CD8-positive, alpha-beta T cell (primary cell): ENCODE measurements at regions of chr11 and their contacts with region 1.

Region 1: GRCh38 chr11:60265373-60266214 is 14.9 kb upstream of the MS4A4A start:
- DNase-seq: peak in 2 of 9 experiments; percentile 25 to 37
- ATAC-seq: no peak
- H3K4me3 ChIP-seq: no peak overlapping the region
- H3K4me3 Mint-ChIP-seq: no peak overlapping the region
- H3K27ac ChIP-seq: no peak overlapping the region
- H3K27ac Mint-ChIP-seq: no peak overlapping the region
- H3K4me1 ChIP-seq: no peaks in the 10 kb centered on the region
- H3K4me1 Mint-ChIP-seq: no peaks in the 10 kb centered on the region
- H3K27me3 ChIP-seq: no peaks in the 10 kb centered on the region
- H3K27me3 Mint-ChIP-seq: no peaks in the 10 kb centered on the region
- CTCF ChIP-seq: peak; percentile 69

Region 2: DNA sequence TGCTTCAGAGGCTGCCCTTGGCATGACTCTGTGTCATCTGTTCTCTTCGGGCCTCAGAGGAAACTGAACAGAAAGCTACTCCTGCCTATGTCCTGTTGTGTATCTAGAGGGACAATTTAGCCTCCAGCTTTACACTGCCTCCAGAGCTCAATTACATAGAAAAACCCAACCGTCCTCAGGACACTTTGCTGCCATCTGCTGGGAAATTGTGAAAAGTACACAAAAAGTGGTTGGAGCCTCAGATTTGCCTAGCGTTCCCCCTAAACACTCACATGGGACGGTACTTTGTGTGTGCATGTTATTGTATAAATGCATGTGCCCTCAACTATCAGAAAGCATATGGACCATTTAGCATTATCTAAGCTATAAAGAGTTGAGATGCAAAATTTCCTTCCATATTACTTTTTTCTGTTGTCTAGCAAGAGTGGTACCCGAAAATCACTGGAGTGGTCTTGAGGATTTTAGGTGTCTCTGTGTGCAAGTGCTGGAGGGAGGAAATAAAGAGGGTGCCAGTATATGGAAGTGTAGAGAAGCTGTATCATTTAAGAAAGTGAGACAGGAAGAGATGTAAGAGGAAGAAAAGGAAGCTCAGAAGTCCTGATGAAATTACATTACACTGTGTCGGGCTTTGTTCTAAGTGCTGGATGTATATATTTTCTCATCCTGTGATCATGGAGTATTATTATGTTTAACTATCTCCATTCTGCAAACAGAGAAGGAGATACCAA is 13.9 kb before region 1 on chr11:
- CTCF ChIA-PET with region 1: interaction called, 20 read pairs
- POLR2A ChIA-PET with region 1: no interaction called
- intact Hi-C with region 1: no loop called
- DNase-seq: peak in 3 of 9 experiments; percentile 7 to 30 (median 11)
- ATAC-seq: no peak
- H3K4me3 ChIP-seq: no peak overlapping the region
- H3K4me3 Mint-ChIP-seq: no peak overlapping the region
- H3K27ac ChIP-seq: no peak overlapping the region
- H3K27ac Mint-ChIP-seq: no peak overlapping the region
- H3K4me1 ChIP-seq: no peaks in the 10 kb centered on the region
- H3K4me1 Mint-ChIP-seq: no peaks in the 10 kb centered on the region
- H3K27me3 ChIP-seq: no peaks in the 10 kb centered on the region
- H3K27me3 Mint-ChIP-seq: peaks cover 22% of the 10 kb centered on the region
- CTCF ChIP-seq: peak; percentile 51